GM12878 (cell line): ENCODE measurements at regions of chr2 and their contacts with region 1.

Region 1: GRCh38 chr2:190746971-190747761 is 98.3 kb downstream of the NAB1 start:
- DNase-seq: no peak
- ATAC-seq: no peak
- H3K4me3 ChIP-seq: no peak overlapping the region
- H3K27ac ChIP-seq: no peak overlapping the region
- H3K4me1 ChIP-seq: no peaks in the 10 kb centered on the region
- H3K27me3 ChIP-seq: no peaks in the 10 kb centered on the region
- CTCF ChIP-seq: no peak
- EP300 ChIP-seq: no peak
- POLR2A ChIP-seq: no peak
- RAD21 ChIP-seq: no peak

Region 2: DNA sequence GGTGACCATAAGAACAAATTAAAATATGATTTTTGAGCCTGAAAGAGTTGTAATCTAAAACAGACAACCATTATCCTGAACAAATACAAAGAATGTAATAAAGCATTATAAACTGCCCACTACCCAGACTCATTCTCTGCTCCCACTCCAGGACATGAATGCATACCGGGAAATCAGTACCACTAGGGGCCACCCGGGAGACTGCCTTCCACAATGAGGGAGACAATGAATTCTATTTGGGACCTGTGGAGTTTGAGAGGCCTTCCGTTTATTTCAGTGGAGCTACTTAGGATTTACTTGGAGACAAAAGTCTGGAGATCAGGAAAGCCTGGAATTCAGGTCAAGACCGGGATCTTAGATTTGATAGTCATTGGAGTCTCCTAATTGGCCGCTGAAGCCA is 48.3 kb before region 1 on chr2:
- CTCF ChIA-PET with region 1: no interaction called
- POLR2A ChIA-PET with region 1: interaction called, 3 read pairs
- RAD21 ChIA-PET with region 1: interaction called, 5 read pairs
- SMC1A ChIA-PET with region 1: interaction called, 12 read pairs
- in situ Hi-C with region 1: no loop called
- intact Hi-C with region 1: no loop called
- DNase-seq: no peak
- ATAC-seq: no peak
- H3K4me3 ChIP-seq: no peak overlapping the region
- H3K27ac ChIP-seq: no peak overlapping the region
- H3K4me1 ChIP-seq: peaks cover 25% of the 10 kb centered on the region
- H3K27me3 ChIP-seq: no peaks in the 10 kb centered on the region
- CTCF ChIP-seq: no peak
- EP300 ChIP-seq: no peak
- POLR2A ChIP-seq: no peak
- RAD21 ChIP-seq: no peak

Region 3: GRCh38 chr2:190726255-190726654 is 20.9 kb before region 1 on chr2:
- CTCF ChIA-PET with region 1: interaction called, 10 read pairs
- POLR2A ChIA-PET with region 1: interaction called, 3 read pairs
- RAD21 ChIA-PET with region 1: interaction called, 5 read pairs
- SMC1A ChIA-PET with region 1: interaction called, 7 read pairs
- in situ Hi-C with region 1: no loop called
- intact Hi-C with region 1: no loop called
- DNase-seq: no peak
- ATAC-seq: no peak
- H3K4me3 ChIP-seq: no peak overlapping the region
- H3K27ac ChIP-seq: no peak overlapping the region
- H3K4me1 ChIP-seq: peaks cover 16% of the 10 kb centered on the region
- H3K27me3 ChIP-seq: no peaks in the 10 kb centered on the region
- CTCF ChIP-seq: no peak
- EP300 ChIP-seq: no peak
- POLR2A ChIP-seq: no peak
- RAD21 ChIP-seq: no peak

Region 4: GRCh38 chr2:190759749-190760213 is 12.6 kb after region 1 on chr2:
- CTCF ChIA-PET with region 1: interaction called, 13 read pairs
- POLR2A ChIA-PET with region 1: no interaction called
- RAD21 ChIA-PET with region 1: interaction called, 5 read pairs
- SMC1A ChIA-PET with region 1: interaction called, 11 read pairs
- in situ Hi-C with region 1: no loop called
- intact Hi-C with region 1: no loop called
- DNase-seq: no peak
- ATAC-seq: no peak
- H3K4me3 ChIP-seq: no peak overlapping the region
- H3K27ac ChIP-seq: no peak overlapping the region
- H3K4me1 ChIP-seq: no peaks in the 10 kb centered on the region
- H3K27me3 ChIP-seq: no peaks in the 10 kb centered on the region
- CTCF ChIP-seq: no peak
- EP300 ChIP-seq: no peak
- POLR2A ChIP-seq: no peak
- RAD21 ChIP-seq: no peak

Region 5: GRCh38 chr2:190979906-190980629 is 232.9 kb after region 1 on chr2:
- CTCF ChIA-PET with region 1: no interaction called
- POLR2A ChIA-PET with region 1: no interaction called
- RAD21 ChIA-PET with region 1: no interaction called
- SMC1A ChIA-PET with region 1: no interaction called
- in situ Hi-C with region 1: no loop called
- intact Hi-C with region 1: no loop called
- DNase-seq: no peak
- ATAC-seq: no peak
- H3K4me3 ChIP-seq: no peak overlapping the region
- H3K27ac ChIP-seq: no peak overlapping the region
- H3K4me1 ChIP-seq: no peaks in the 10 kb centered on the region
- H3K27me3 ChIP-seq: no peaks in the 10 kb centered on the region
- CTCF ChIP-seq: no peak
- EP300 ChIP-seq: no peak
- POLR2A ChIP-seq: peak; percentile 58
- RAD21 ChIP-seq: no peak